GM18951 (cell line): ENCODE measurements at regions of chr11 and their contacts with region 1.

Region 1: GRCh38 chr11:73350908-73351636 is 25.1 kb upstream of the RELT start:
- POLR2A ChIP-seq: no peak

Region 2: DNA sequence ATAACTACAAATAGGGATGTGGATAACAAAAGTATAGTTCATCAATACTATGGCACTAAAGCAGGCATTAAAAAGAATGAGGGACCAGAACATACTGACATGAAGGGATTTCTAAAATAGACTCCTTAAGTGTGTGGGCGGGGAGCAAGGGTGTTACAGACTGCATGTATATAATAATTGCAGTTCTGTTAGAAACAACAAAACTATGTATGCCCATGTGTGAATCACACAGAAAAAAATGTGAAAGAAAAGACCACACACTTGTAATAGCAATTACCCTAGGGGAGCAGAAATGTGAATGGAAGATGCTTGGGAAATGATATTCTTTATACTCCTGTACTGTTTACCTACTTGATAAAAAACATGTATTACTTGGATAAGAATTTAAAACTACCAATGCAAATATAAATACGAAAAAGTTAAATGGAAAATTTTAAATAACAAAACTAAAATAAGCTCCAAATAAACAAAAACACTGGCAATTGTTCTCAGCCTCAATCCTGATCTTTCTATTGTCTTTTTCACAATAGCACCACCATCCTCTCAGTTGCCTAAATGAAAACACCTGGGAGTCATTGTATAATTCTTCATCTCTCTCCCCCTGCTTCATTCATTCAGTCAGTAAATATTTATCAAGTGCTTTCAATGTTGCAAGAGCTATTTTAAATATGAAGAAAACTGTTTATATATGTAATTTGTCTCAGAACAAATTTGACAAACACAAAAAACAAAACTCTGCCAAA is 338.8 kb before region 1 on chr11:
- in situ Hi-C with region 1: no loop called
- POLR2A ChIP-seq: no peak

Region 3: GRCh38 chr11:73227588-73228211 is 123.4 kb before region 1 on chr11:
- in situ Hi-C with region 1: no loop called
- POLR2A ChIP-seq: no peak

Region 4: DNA sequence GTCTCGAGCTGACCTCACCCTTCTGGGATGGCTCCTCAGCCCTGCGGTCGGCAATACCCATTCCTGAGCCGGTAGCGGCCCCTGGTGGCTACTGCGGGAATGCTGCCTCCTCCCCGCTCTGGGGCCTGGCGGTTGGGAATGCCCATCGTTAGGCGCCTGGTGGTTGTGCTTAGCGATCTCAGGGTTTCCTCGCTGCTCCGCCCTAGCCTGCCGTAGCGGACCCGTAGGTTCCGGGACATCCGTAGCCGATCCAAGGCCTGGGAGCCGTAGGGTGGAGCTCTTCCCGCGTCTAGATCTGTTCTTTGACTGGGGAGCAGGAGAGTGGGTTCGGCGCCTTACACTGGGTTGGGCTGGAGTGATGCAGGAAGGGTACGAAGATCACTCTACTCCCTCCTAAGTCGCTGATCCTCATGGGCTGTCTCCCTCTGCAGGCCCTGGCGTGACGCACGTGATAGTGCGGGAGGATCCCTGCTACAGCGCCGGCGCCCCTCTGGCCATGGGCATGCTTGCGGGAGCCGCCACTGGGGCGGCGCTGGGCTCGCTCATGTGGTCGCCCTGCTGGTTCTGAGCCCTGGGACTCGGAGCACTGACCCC is 310.1 kb after region 1 on chr11:
- in situ Hi-C with region 1: loop called (anchors 5 kb)
- POLR2A ChIP-seq: no peak